ENCODE measurements at regions of chr1 and their contacts with region 1.

Region 1: GRCh38 chr1:61436016-61436415 is 288.9 kb downstream of the TM2D1 start:
- DNase-seq: no peak
- ATAC-seq: no peak

Region 2: DNA sequence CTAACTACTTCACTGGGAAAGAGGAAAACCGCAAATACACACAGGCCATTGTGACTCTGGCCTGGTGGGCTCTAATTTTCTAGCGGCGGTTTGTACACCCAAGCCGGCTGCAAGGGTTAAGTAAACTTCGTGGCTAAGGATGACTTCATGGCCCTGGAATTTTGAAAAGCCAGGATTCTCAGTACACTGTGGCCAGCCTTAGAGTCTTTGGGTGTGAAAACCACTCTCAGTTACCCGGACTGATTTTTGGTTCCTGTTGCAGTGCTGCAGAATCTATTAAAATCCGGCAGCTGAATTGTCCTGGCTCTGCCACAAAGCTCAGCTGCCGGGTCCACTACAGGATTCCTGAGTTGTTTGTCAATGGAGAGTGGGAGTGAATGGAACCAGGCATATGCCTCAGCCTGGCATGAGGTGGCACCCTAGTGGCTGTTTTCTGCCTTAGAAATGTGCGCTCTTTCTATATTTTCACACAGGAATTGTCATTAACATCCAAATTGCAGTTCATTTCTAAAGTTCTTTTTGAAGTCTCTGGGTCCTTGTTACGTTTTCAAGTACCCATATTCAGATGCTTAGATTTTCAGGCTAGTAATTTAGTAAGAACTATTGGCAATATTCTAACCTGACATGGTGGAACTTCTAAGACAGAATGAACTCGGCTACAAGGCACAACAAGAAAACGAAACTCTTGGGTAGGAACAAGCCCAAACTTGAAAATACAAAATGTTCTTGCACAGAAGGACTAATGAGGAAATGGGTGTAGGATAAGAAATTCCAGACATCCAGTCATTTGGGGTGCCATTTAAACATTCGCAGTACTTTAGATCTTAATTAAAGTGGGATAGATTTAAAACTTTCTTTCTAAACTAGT is 97.8 kb before region 1 on chr1:
- intact Hi-C with region 1: loop called (anchors 5 kb)
- DNase-seq: peak; percentile 73
- ATAC-seq: peak; percentile 84

Region 3: DNA sequence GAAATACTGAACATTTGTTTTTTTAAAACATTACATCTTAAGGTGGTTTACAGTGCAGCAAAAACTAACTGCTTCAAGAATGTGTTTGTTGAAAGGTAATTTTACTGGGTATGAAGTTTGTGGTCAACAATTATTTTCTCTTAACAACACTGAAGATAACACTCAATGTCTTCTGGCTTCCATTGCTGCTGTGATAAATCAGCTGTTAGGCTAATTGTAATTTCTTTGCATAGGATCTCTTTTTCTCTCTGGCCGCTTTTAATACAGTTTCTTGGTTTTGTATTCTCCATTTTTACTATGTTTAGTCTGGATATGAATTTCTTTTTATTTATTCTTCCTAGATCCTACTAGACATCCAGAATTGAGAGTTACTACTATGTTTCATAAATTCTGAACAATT is 1207.3 kb after region 1 on chr1:
- intact Hi-C with region 1: no loop called
- DNase-seq: no peak
- ATAC-seq: no peak